ENCODE measurements at regions of chr1 and their contacts with region 1.

Region 1: DNA sequence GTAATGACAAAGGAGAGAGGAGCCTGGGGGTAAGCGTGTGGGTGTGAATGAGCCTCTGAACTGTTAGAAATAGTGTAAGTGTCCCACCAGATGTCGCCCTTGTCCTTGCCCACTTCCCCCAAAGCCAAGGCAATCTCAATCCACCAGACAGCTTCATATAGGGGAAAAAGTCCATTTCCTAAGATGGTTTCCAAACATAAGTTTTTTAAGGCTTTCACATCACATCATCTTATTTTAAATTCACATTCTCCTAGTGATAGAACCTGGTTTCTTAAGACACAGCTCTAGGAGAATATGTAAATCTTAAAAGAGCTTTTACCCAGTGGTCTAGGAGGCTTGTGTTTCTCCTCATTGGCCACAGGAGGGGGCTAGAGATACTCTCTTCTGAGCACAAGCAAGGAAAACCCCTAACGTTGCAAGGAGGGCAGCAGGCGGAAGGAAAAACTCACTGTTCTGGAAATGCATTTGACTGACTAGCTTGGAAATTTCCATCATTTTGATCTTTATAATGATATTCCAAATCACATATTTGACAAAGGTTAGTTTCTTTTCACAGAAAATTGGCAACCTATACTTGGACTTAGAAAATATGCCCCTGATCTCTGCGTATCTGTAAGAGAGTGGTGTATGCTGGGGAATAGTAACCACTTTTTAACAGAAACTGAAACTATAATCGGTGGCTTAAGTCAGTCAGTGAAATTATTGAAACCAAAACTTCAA is 51.9 kb upstream of the LPAR3 start:
- DNase-seq: peak; percentile 22 to 95 (median 81)
- ATAC-seq: peak; percentile 90 to 92
- H3K4me3 Mint-ChIP-seq: peak overlapping the region; percentile 70 to 92 (median 88)
- H3K27ac Mint-ChIP-seq: peak overlapping the region; percentile 87 to 99 (median 98)
- H3K4me1 Mint-ChIP-seq: peaks cover 0 to 17% (median 12%) of the 10 kb centered on the region in 4 donors
- H3K27me3 Mint-ChIP-seq: no peaks in the 10 kb centered on the region

Region 2: GRCh38 chr1:84930329-84930728 is 14.6 kb before region 1 on chr1:
- POLR2A ChIA-PET with region 1: no interaction called
- DNase-seq: peak in 2 of 10 donors; percentile 10 to 13
- ATAC-seq: peak; percentile 67 to 75
- H3K4me3 Mint-ChIP-seq: peak overlapping the region in 8 of 10 donors; percentile 1 to 54 (median 15)
- H3K27ac Mint-ChIP-seq: peak overlapping the region in 5 of 10 donors; percentile 11 to 79 (median 45)
- H3K4me1 Mint-ChIP-seq: peaks cover 9 to 17% (median 13%) of the 10 kb centered on the region in 4 donors
- H3K27me3 Mint-ChIP-seq: peaks cover 0 to 1% (median 0%) of the 10 kb centered on the region in 5 donors

Region 3: DNA sequence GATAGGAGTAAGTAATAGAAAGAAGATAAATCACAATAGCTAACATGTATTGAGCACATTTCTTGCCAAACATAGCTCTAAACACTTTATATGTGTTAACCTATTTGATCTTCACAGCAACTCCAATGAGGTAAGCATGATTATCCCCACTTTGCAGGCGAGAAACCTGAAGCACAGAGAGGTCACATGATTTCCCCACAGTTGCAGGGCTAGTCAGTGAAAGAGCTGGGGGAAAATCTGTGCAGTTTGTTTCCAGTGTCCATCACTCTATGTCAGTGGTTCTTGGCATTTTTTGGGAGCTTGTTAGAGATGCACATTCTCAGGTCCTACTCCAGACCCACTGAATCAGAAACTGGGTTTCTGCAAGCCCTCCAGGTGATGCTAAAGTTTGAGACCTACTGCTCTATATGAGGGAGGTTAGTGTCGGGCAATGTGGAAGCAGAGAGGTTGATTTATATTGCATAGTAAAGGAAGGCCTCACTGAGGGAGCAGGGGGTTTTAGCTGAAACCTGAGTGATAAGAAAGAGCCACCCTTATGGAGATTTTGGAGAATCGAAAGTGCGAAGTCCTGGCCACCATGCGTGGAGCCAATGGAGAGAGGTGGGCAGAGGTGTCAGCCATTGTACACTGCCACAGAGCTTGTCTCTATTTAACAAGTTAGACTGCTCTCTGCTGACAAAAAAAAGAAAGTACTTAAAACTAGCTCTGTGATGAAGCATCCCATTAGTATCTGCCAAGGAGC is 82.5 kb after region 1 on chr1:
- POLR2A ChIA-PET with region 1: interaction called, 29 read pairs
- DNase-seq: peak in 5 of 10 donors; percentile 10 to 64 (median 49)
- ATAC-seq: peak; percentile 94 to 96
- H3K4me3 Mint-ChIP-seq: peak overlapping the region in 9 of 10 donors; percentile 28 to 83 (median 62)
- H3K27ac Mint-ChIP-seq: peak overlapping the region; percentile 53 to 91 (median 80)
- H3K4me1 Mint-ChIP-seq: peaks cover 7 to 16% (median 9%) of the 10 kb centered on the region in 4 donors
- H3K27me3 Mint-ChIP-seq: peaks cover 0 to 1% (median 0%) of the 10 kb centered on the region in 5 donors

Region 4: DNA sequence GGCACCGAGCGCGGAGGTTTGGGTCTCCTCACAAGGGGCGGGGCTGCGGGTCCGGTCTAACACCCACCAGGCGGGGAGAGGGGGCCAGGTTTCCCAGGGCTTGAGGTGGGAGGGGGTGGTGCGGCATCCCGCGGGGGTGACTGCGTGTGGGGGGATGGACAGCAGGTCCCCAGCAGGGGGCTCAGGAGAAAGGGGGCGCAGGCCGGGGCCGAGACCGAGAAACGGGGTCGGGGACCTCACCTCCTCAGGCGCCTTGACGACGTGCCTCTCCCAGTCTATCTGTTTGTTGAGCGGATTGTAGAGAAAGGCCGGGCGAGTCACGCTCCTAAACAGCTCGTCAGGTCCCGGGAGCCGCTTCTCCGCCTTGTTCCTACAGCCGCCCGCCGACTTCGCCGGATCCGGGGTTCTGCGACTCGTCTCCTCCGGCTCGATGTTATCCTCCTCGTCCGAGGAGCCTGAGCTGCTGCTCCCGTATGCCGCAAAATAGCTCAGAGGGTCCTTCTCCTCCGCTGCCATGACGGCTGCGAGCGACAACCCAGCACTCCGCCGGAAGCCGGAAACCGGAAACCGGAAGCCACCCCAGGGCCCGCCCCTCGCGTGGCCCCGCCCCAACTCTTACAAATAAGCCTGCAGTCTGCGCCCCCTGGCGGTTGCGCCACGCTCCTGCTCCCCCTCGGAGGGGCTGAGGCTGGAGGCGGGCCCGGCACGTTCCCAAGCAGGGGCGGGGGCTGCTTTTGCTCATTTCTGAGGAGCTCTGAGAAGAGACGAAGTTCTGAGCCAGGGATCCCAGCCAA is 314.4 kb after region 1 on chr1 and contains the start of gene C1orf52:
- POLR2A ChIA-PET with region 1: interaction called, 31 read pairs
- DNase-seq: peak; percentile 90 to 98 (median 96)
- ATAC-seq: peak; percentile 92 to 96
- H3K4me3 Mint-ChIP-seq: peak within 1 kb of the TSS; percentile 94 to 99 (median 97)
- H3K27ac Mint-ChIP-seq: peak within 1 kb of the TSS; percentile 91 to 99 (median 98)
- H3K4me1 Mint-ChIP-seq: peaks cover 23 to 42% (median 39%) of the 10 kb centered on the region in 4 donors
- H3K27me3 Mint-ChIP-seq: no peaks in the 10 kb centered on the region
- polyA plus RNA-seq, gene C1orf52: 15.3 to 28.7 (median 22.4) TPM